ENCODE measurements at regions of chr22 and their contacts with region 1.

Region 1: DNA sequence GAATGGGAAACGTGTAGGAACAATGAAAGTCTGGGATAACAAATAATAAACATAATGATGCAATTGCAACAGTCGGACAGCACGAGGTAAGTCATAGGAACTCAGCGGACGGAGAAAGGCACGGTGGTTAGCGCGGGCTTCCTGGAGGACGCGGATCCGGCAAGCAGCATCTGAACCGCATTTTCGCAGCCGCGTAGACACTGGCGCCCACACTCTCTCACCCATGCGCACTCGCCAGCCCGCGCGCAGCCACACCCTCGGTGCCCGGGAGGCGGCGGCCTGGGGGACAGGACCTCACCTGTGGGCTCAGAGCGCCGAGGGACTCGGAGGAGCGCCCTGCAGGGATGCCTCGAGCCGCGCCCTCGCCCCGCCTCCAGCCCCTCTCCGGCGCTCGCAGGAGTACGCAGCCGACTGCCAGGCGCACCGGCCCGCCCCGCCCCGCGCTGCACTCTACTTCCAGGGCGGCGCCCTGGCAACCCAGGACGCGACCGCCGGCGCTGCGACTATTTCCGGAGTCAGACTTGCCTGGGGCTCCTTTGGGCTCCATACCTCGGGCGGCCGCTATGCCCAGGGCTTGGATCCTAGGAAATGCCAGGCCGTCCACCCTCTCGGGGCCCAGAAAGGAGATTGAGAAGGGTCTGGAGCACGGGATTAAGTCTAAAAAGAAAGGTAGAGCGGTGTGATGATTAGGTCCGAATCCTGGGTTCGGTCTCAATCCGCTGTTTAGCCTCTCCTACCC is at the start of gene TTLL1:
- DNase-seq: peak; percentile 27
- ATAC-seq: peak; percentile 96
- H3K4me3 ChIP-seq: peak within 1 kb of the TSS; percentile 74
- H3K27ac ChIP-seq: peak within 1 kb of the TSS; percentile 27; the same call in 1 of the 2 replicates
- H3K4me1 ChIP-seq: peaks cover 15% of the 10 kb centered on the region
- H3K27me3 ChIP-seq: no peaks in the 10 kb centered on the region
- CTCF ChIP-seq: no peak
- EP300 ChIP-seq: no peak
- POLR2A ChIP-seq: peak; percentile 84
- RAD21 ChIP-seq: no peak
- polyA plus RNA-seq, gene TTLL1: 0.39 to 0.80 TPM

Region 2: DNA sequence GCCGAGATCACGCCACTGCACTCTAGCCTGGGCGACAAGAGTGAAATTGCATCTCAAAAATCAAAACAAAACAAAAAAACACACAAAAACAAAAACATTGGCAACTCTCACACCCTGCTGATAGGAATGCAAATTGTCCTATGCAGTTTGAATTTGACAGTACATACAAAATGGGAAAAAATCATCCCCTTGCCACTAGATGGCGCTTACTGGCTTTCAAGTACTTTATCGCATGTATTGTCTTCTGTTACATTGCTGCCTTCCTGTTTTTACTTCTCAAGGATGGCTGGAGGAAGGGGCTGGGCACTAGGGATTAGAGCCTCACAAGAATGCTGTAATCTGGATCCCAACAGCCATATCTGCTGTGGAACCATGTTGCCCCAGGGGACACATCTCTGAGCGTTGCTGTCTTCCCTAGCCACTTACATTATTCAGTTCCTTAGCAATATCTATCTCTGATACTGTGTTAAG is 309.0 kb before region 1 on chr22:
- CTCF ChIA-PET with region 1: interaction called, 5 read pairs
- POLR2A ChIA-PET with region 1: no interaction called
- RAD21 ChIA-PET with region 1: no interaction called
- SMC1A ChIA-PET with region 1: no interaction called
- in situ Hi-C with region 1: no loop called
- intact Hi-C with region 1: loop called (anchors 1 kb)
- DNase-seq: peak; percentile 59
- ATAC-seq: peak; percentile 91
- H3K4me3 ChIP-seq: no peak overlapping the region
- H3K27ac ChIP-seq: no peak overlapping the region
- H3K4me1 ChIP-seq: no peaks in the 10 kb centered on the region
- H3K27me3 ChIP-seq: no peaks in the 10 kb centered on the region
- CTCF ChIP-seq: peak; percentile 61 to 92 (median 85); a peak in 5 of 6 replicates
- EP300 ChIP-seq: no peak
- POLR2A ChIP-seq: no peak
- RAD21 ChIP-seq: peak; percentile 77

Region 3: DNA sequence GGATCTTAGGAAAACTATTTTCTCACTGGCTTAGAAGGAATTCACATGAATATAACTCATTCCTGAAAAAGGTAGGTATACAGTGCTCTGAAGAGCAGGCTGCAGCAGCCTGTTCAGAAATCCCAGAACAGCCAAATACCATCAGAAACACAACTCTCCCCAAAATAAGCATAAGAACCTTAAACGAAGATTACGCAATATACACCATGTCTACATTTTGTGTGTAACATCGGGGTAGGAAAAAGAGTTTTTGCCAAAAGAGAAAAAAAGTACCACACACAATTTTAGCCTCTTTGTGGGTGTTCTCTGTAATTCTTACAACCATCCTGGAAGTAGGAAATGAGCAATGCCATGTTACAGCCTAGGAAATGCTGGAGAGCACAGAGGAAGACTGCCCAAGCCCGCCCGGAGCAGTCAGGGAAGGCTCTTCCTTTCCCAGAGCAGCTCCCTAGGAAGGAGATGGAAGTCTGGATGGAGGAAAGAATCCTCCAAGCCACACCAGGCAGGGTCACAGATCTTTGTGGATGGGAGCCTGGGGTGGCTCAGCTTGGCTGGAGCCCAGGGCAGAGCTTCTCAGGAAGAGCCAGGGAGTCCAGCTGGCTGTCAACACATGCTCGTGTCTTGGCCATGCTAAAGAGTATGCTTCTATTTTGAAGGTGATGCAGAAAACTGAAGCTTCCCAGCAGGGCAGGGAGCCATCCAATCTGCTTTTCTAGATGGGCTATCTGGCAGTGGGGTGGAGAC is 182.4 kb before region 1 on chr22:
- CTCF ChIA-PET with region 1: no interaction called
- POLR2A ChIA-PET with region 1: no interaction called
- RAD21 ChIA-PET with region 1: no interaction called
- SMC1A ChIA-PET with region 1: no interaction called
- in situ Hi-C with region 1: no loop called
- intact Hi-C with region 1: no loop called
- DNase-seq: no peak
- ATAC-seq: no peak
- H3K4me3 ChIP-seq: no peak overlapping the region
- H3K27ac ChIP-seq: no peak overlapping the region
- H3K4me1 ChIP-seq: no peaks in the 10 kb centered on the region
- H3K27me3 ChIP-seq: no peaks in the 10 kb centered on the region
- CTCF ChIP-seq: no peak
- EP300 ChIP-seq: no peak
- POLR2A ChIP-seq: no peak
- RAD21 ChIP-seq: no peak

Region 4: DNA sequence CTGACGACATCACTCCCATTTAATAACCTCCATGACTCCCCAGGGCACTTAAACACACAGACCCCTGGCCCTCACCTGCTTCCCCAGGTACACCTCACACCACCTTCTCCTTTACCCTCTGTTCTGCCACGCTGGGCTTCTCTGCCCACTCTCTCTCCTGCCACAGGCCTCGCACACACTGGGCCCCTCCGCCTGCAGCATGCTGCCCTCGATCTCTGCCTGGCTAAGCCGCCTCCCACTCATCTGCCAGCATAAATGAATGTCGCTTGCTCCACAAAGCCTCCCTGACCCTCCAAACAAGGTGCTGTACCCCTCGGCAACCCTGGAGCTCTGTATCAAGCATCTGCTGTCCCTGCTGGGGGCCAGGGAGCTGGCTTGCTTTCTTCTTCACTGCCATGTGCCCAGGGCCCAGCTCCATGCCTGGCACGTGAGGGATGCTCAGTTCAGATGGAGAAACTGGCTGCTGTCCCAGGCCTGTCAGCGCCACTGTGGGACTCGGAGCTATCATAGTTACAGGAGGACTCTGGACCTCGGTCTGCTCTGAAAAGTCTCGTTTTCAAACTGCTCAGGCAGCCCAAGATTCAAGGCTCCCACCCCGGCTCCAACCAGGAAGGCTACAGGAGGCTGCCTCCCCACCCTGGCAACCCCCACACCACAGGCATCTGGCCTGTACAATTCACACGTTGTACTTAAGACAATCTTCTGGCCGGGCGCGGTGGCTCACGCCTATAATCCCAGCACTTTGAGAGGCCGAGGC is 11.8 kb before region 1 on chr22:
- CTCF ChIA-PET with region 1: no interaction called
- POLR2A ChIA-PET with region 1: no interaction called
- RAD21 ChIA-PET with region 1: no interaction called
- SMC1A ChIA-PET with region 1: no interaction called
- in situ Hi-C with region 1: no loop called
- intact Hi-C with region 1: no loop called
- DNase-seq: no peak
- ATAC-seq: no peak
- H3K4me3 ChIP-seq: no peak overlapping the region
- H3K27ac ChIP-seq: no peak overlapping the region
- H3K4me1 ChIP-seq: no peaks in the 10 kb centered on the region
- H3K27me3 ChIP-seq: no peaks in the 10 kb centered on the region
- CTCF ChIP-seq: no peak
- EP300 ChIP-seq: no peak
- POLR2A ChIP-seq: no peak
- RAD21 ChIP-seq: no peak